ENCODE measurements at regions of chr2 and their contacts with region 1.

Region 1: GRCh38 chr2:208175069-208175839 is 11.9 kb upstream of the CRYGA start:
- DNase-seq: peak; percentile 70
- ATAC-seq: peak; percentile 97
- H3K4me3 Mint-ChIP-seq: no peak overlapping the region
- H3K27ac Mint-ChIP-seq: no peak overlapping the region
- H3K4me1 Mint-ChIP-seq: peaks cover 3% of the 10 kb centered on the region
- H3K27me3 Mint-ChIP-seq: peaks cover 12% of the 10 kb centered on the region

Region 2: GRCh38 chr2:208092093-208092832 is 83.0 kb before region 1 on chr2:
- CTCF ChIA-PET with region 1: no interaction called
- POLR2A ChIA-PET with region 1: no interaction called
- DNase-seq: no peak
- ATAC-seq: no peak
- H3K4me3 Mint-ChIP-seq: no peak overlapping the region
- H3K27ac Mint-ChIP-seq: no peak overlapping the region
- H3K4me1 Mint-ChIP-seq: no peaks in the 10 kb centered on the region
- H3K27me3 Mint-ChIP-seq: peaks cover 3% of the 10 kb centered on the region

Region 3: DNA sequence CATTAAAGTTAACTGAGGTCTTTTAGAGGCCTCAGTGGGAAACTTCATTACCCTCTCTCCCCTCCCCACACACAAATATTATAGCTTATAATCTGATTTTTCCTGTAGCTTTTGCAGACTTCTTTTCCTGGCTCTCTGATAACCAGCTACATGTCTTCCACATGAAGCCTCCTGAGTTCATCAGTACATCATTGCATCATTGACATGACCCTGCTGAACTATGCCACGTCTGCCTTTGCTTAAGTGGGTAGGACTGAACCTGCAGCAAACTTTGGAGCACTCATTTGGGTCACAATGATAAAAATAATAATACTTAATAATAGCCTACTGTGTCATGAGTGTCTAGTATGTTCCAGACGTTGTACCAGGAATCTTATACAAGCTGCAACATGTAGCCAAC is 18.8 kb before region 1 on chr2:
- CTCF ChIA-PET with region 1: interaction called, 17 read pairs
- POLR2A ChIA-PET with region 1: no interaction called
- DNase-seq: no peak
- ATAC-seq: no peak
- H3K4me3 Mint-ChIP-seq: no peak overlapping the region
- H3K27ac Mint-ChIP-seq: no peak overlapping the region
- H3K4me1 Mint-ChIP-seq: no peaks in the 10 kb centered on the region
- H3K27me3 Mint-ChIP-seq: peaks cover 14% of the 10 kb centered on the region